PC-3 (cell line): ENCODE measurements at regions of chr5 and their contacts with region 1.

Region 1: GRCh38 chr5:137629646-137630045 is 106.2 kb downstream of the KLHL3 start:
- DNase-seq: peak; percentile 73
- ATAC-seq: peak; percentile 78
- H3K4me3 ChIP-seq: no peak overlapping the region
- H3K27ac ChIP-seq: no peak overlapping the region
- H3K4me1 ChIP-seq: peaks cover 17% of the 10 kb centered on the region
- H3K27me3 ChIP-seq: no peaks in the 10 kb centered on the region
- CTCF ChIP-seq: peak; percentile 86

Region 2: DNA sequence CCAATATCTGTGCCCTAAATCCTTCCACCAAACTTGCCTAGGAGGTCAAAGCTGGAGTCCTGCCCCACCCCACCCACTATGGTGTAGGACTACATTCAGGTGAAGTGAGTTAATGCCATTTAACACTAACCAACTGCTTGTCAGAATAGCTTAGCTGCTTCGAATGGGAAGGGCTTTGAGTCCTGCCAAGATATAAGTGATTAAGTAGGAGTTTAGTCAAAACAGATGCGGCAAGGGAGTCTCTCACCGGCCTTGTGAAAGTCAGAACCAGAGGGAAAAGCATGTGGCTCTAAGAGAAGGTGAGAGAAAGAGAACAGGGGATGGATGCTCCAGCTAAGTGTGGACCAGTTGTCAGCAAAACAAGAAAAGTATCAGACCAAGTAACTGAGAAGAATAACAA is 263.1 kb before region 1 on chr5:
- CTCF ChIA-PET with region 1: interaction called, 18 read pairs
- POLR2A ChIA-PET with region 1: no interaction called
- intact Hi-C with region 1: no loop called
- DNase-seq: no peak
- ATAC-seq: no peak
- H3K4me3 ChIP-seq: no peak overlapping the region
- H3K27ac ChIP-seq: no peak overlapping the region
- H3K4me1 ChIP-seq: peaks cover 22% of the 10 kb centered on the region
- H3K27me3 ChIP-seq: no peaks in the 10 kb centered on the region
- CTCF ChIP-seq: no peak

Region 3: DNA sequence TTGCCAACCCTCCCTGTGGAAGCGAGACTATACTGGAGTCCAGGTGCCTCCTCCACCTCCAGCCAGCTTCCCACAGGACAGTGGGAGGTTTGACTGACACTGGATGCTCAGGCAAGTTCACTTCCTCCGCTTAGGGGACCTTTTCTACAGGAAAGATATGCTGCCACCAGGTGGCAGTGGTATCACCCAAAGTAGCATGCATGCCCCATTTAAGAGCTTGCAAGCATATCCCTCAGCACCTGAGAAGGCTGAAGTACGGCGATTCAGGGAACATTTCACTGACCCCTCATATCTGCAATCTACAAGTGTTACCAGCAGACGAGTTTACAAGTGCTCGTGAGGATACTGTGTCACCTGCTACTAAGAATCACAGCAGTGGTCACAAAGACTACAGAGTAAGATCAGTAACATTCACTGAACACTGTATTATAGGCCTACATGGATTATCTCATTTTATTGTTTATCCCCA is 30.7 kb after region 1 on chr5:
- CTCF ChIA-PET with region 1: interaction called, 5 read pairs
- POLR2A ChIA-PET with region 1: no interaction called
- intact Hi-C with region 1: loop called (anchors 1 kb)
- DNase-seq: peak; percentile 79
- ATAC-seq: peak; percentile 98
- H3K4me3 ChIP-seq: no peak overlapping the region
- H3K27ac ChIP-seq: no peak overlapping the region
- H3K4me1 ChIP-seq: no peaks in the 10 kb centered on the region
- H3K27me3 ChIP-seq: no peaks in the 10 kb centered on the region
- CTCF ChIP-seq: peak; percentile 77

Region 4: DNA sequence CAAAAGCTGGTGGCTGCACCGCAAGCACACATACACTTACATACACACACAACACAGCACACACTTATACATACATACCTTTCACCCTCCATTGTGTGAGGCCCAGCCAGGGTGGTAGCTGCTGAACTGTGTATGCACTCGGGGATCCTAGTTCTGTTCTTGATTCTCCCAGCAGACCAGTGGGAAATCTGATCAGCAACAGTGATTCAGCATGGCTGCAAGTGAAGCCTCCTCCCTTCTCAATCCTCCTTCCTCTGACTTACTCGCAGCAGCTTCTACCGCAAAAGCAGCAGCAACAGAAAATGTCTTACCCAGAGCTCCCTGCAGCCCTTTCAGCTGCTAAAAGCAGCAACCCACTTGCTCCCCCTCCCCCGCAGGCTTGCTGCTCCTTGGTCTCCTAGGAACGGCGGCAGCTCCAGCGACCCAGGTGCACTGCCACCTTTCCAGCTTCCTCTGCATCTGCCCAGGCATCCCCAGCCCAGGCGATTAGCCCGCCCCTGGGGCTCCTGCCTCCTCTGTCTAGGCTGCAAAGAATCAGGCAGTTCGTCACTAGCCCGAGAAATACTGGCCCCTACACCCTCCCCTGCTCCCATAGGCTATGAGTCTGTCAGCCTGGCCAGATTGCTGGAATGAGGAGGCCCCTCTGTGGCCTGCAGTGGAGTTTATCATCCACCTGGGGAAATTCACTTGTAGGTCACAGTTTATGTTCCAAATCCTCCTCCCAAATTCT is 106.1 kb after region 1 on chr5 and contains the start of gene KLHL3:
- CTCF ChIA-PET with region 1: interaction called, 7 read pairs
- POLR2A ChIA-PET with region 1: no interaction called
- intact Hi-C with region 1: loop called (anchors 2 kb)
- DNase-seq: peak; percentile 72
- ATAC-seq: peak; percentile 82
- H3K4me3 ChIP-seq: peak within 1 kb of the TSS; percentile 77
- H3K27ac ChIP-seq: peak within 1 kb of the TSS; percentile 40
- H3K4me1 ChIP-seq: peaks cover 40% of the 10 kb centered on the region
- H3K27me3 ChIP-seq: no peaks in the 10 kb centered on the region
- CTCF ChIP-seq: peak; percentile 58
- total RNA-seq, gene KLHL3: 2.9 and 4.0 TPM in 2 replicates

Region 5: GRCh38 chr5:137743031-137743640 is 113.5 kb after region 1 on chr5:
- CTCF ChIA-PET with region 1: interaction called, 6 read pairs
- POLR2A ChIA-PET with region 1: no interaction called
- intact Hi-C with region 1: loop called (anchors 1 kb)
- DNase-seq: peak; percentile 73
- ATAC-seq: peak; percentile 84
- H3K4me3 ChIP-seq: no peak overlapping the region
- H3K27ac ChIP-seq: no peak overlapping the region
- H3K4me1 ChIP-seq: no peaks in the 10 kb centered on the region
- H3K27me3 ChIP-seq: no peaks in the 10 kb centered on the region
- CTCF ChIP-seq: peak; percentile 63

Region 6: DNA sequence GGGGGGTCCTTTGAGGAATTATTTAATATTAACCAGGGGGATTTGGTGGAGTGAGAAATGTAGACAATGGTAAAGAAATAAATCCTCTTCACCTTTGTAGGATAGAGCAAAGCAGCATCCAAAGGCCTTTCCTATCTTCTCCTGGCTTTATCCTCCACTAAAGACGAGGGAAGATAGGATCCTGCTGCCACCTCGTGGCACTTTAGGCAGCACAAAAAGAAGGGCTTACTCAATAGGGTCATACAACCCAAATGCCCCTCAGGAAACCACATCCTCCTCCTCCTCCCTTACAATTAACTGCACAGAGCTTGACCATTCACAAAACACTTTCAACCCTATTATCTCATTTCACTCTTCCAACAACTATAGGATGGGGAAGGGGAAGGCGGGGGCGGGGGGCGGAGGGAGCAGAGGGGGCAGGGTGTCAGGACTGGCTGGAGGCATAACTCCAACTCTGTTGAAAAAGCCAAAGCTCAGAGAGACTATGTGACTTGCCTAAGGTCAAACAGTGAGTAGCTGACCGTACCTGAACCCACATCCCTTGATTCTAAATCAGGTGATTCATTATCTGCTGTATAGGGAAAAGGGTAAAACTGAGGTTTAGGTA is 192.6 kb after region 1 on chr5:
- CTCF ChIA-PET with region 1: no interaction called
- POLR2A ChIA-PET with region 1: no interaction called
- intact Hi-C with region 1: loop called (anchors 10 kb)
- DNase-seq: peak; percentile 70
- ATAC-seq: peak; percentile 67
- H3K4me3 ChIP-seq: no peak overlapping the region
- H3K27ac ChIP-seq: no peak overlapping the region
- H3K4me1 ChIP-seq: peaks cover 15% of the 10 kb centered on the region
- H3K27me3 ChIP-seq: no peaks in the 10 kb centered on the region
- CTCF ChIP-seq: peak; percentile 65

Region 7: DNA sequence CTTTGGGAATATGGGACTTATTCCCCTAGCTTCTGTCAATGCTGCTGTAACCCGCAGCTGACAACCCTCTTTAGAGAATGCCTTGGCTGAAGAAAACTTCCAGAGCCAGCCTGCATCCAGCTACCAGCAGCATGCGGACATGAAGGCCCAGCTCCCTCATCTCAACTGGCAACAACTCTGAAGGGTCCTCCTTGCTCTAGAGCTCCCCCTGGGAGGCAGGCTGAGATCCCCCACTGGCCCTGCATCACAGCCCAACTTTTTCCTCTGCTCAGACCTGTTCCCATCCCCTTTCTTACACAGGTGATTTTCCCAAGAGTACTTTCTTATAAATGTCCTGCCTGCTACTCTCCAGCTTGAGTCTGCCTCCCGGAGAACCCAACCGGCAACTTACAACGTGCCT is 435.5 kb after region 1 on chr5:
- CTCF ChIA-PET with region 1: interaction called, 4 read pairs
- POLR2A ChIA-PET with region 1: no interaction called
- intact Hi-C with region 1: loop called (anchors 2 kb)
- DNase-seq: peak; percentile 3
- ATAC-seq: no peak
- H3K4me3 ChIP-seq: no peak overlapping the region
- H3K27ac ChIP-seq: no peak overlapping the region
- H3K4me1 ChIP-seq: no peaks in the 10 kb centered on the region
- H3K27me3 ChIP-seq: no peaks in the 10 kb centered on the region
- CTCF ChIP-seq: peak; percentile 56